ENCODE measurements at regions of chr19 and their contacts with region 1.

Region 1: DNA sequence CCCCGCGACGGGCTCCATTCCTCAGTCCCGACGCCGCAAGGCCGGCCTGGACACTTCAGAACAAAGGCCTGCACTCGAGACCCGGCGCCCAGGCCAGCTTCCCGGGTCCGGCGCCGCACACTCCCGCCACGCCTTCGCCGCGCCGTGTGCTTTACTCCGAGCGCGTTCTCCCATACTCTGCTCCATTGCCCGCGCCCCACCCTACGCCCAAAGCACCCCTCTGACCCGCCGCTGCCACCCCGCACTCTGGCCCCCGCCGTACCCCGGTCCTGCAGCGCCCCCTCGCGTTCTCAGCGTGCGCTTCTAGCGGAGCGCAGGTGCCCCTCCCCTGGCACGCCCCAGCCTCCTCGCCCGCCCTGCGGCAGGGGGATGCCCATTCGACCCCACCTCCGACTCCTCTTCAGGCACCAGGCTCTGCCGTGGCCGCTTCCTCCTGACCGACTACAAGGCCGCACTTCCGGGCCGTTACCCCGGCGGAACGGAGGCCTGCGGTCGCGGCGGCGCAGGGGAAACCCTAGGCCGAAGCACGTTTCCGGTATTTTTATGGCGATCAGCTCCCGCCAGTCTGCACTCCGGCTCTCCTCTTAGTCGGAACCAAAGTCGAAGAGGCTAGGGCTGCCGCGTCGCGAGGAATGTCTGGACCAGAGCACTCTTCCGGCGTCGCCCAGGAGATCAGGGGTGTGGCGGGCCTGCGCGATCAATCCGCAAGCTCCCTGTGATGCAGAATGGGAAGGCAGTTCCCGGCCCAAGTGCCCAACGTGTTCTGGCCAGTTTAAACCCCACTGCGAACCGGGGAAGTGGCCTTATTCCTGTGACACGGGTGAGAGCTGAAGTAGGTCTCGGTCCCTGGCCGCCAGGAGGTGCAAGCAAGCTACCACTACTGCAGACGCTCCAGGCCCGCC is at the start of gene ZBTB45:
- DNase-seq: peak; percentile 91 to 96
- H3K4me3 ChIP-seq: peak within 1 kb of the TSS; percentile 54 to 87 (median 70)
- H3K27ac ChIP-seq: peak within 1 kb of the TSS; percentile 91
- H3K4me1 ChIP-seq: peaks cover 0 to 29% (median 16%) of the 10 kb centered on the region in 4 experiments; a peak in 6 of 7 replicates
- H3K27me3 ChIP-seq: no peaks in the 10 kb centered on the region; a peak in 1 of 7 replicates
- CTCF ChIP-seq: peak; percentile 83 to 93 (median 86)
- EP300 ChIP-seq: no peak
- POLR2A ChIP-seq: peak; percentile 8 to 37; a peak in 2 of 3 replicates
- RAD21 ChIP-seq: peak; percentile 78 to 79
- total RNA-seq, gene ZBTB45: 16.9 and 17.3 TPM in 2 replicates

Region 2: GRCh38 chr19:58475714-58476497 is 43.7 kb before region 1 on chr19 and contains the start of gene ZNF446:
- CTCF ChIA-PET with region 1: interaction called, 7 read pairs
- POLR2A ChIA-PET with region 1: interaction called, 14 read pairs
- DNase-seq: peak; percentile 76 to 93
- H3K4me3 ChIP-seq: peak within 1 kb of the TSS; percentile 42 to 76 (median 70)
- H3K27ac ChIP-seq: peak within 1 kb of the TSS; percentile 65; the same call in 1 of the 2 replicates
- H3K4me1 ChIP-seq: peaks cover 0 to 6% (median 5%) of the 10 kb centered on the region in 4 experiments; a peak in 6 of 7 replicates
- H3K27me3 ChIP-seq: peaks cover 0 to 3% (median 0%) of the 10 kb centered on the region in 4 experiments; a peak in 3 of 7 replicates
- CTCF ChIP-seq: no peak
- EP300 ChIP-seq: no peak
- POLR2A ChIP-seq: peak in 1 of 2 experiments; percentile 73; a peak in 2 of 3 replicates
- RAD21 ChIP-seq: no peak; a peak in 1 of 4 replicates
- total RNA-seq, gene ZNF446: 4.1 and 4.3 TPM in 2 replicates

Region 3: DNA sequence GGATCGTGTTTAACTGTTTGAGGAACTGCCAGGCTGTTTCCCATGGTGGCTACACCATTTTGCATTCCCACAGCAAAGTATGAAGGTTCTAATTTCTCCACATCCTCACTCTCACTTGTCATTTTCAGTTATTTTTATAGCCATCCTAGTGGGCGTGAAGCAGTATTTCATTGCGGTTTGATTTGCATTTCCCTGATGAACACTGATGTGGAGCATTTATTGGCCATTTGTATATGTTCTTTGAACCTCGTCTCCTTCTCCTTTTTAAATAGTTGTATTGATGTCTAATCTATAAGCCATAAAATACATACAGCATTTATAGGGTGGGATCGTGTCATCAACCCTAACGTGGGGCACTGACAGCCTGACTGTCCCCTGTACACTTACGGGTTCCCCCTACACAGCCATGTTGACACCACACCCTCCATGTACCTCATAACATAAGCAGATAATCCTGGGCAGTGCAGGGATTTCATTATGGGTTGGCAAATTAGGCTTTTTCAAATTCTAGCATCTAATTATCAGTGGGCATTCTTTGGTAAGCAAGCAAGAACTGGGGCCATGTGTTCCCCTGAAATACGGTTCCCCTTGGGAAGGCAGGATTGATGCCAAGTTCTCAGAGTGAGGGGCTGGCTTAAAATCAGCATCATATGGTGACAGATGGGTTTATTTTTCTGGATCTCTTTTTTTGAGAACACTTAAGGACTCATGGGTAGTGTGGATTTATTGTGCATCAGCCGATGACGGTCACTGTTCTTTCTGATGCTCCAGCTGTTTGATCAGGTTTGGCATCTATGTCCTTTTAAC is 11.6 kb after region 1 on chr19:
- CTCF ChIA-PET with region 1: interaction called, 15 read pairs
- POLR2A ChIA-PET with region 1: interaction called, 21 read pairs
- DNase-seq: no peak
- H3K4me3 ChIP-seq: no peak overlapping the region
- H3K27ac ChIP-seq: no peak overlapping the region
- H3K4me1 ChIP-seq: no peaks in the 10 kb centered on the region
- H3K27me3 ChIP-seq: peaks cover 0 to 4% (median 0%) of the 10 kb centered on the region in 4 experiments; a peak in 1 of 7 replicates
- CTCF ChIP-seq: no peak
- EP300 ChIP-seq: no peak
- POLR2A ChIP-seq: no peak
- RAD21 ChIP-seq: no peak

Region 4: DNA sequence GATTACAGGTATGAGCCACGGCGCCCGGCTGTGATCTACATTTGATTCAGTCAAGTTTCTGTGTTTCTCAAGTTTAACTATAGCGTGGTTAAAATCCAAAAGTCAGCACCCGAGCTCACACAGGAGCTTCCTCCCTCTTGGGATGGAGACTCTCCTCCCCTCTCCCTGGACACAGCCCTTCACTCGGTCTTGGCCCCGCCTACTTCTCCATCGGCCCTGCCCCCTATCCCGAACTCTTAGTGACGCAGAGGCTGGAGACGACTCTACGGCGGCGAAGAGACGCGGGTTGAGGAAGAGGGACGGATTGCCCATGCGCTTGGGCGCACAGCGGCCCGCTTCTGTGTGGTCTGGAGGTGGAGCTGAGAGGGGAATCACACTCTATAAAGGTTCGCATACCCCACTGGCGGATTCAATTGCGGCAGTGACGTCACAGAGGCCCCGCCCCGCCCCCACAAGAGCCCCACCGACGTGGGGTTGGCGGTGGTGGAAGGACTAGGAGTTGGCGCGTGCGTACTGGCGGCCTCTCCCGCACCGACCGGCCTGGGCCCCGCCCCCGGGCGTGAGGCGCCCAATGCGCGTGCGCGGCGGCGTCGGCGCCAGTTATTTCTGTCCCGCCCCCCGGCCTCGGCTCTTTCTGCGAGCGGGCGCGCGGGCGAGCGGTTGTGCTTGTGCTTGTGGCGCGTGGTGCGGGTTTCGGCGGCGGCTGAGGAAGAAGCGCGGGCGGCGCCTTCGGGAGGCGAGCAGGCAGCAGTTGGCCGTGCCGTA is 24.4 kb after region 1 on chr19 and contains the start of gene TRIM28:
- CTCF ChIA-PET with region 1: interaction called, 26 read pairs
- POLR2A ChIA-PET with region 1: interaction called, 650 read pairs
- DNase-seq: peak; percentile 91 to 99
- H3K4me3 ChIP-seq: peak within 1 kb of the TSS; percentile 89 to 100 (median 94)
- H3K27ac ChIP-seq: peak within 1 kb of the TSS; percentile 96
- H3K4me1 ChIP-seq: peaks cover 3 to 10% (median 5%) of the 10 kb centered on the region in 4 experiments; a peak in 6 of 7 replicates
- H3K27me3 ChIP-seq: peaks cover 0 to 24% (median 10%) of the 10 kb centered on the region in 4 experiments; a peak in 5 of 7 replicates
- CTCF ChIP-seq: no peak
- EP300 ChIP-seq: 0 out of 3 replicates have a peak, but pooled peaks of 1 of the 2 experiments have one; percentile 1
- POLR2A ChIP-seq: peak; percentile 93 to 95
- RAD21 ChIP-seq: no peak
- total RNA-seq, gene TRIM28: 1,398 and 1,433 TPM in 2 replicates

Region 5: GRCh38 chr19:58558623-58559274 is 39.1 kb after region 1 on chr19:
- CTCF ChIA-PET with region 1: interaction called, 35 read pairs
- POLR2A ChIA-PET with region 1: interaction called, 650 read pairs
- DNase-seq: peak; percentile 97 to 100
- H3K4me3 ChIP-seq: peak overlapping the region; percentile 76 to 97 (median 86)
- H3K27ac ChIP-seq: peak overlapping the region; percentile 98
- H3K4me1 ChIP-seq: peaks cover 0 to 45% (median 22%) of the 10 kb centered on the region in 4 experiments; a peak in 6 of 7 replicates
- H3K27me3 ChIP-seq: peaks cover 0 to 14% (median 5%) of the 10 kb centered on the region in 4 experiments; a peak in 4 of 7 replicates
- CTCF ChIP-seq: no peak
- EP300 ChIP-seq: no peak
- POLR2A ChIP-seq: peak in 1 of 2 experiments; percentile 78; a peak in 2 of 3 replicates
- RAD21 ChIP-seq: no peak

Region 6: GRCh38 chr19:58581227-58582151 is 61.9 kb after region 1 on chr19:
- CTCF ChIA-PET with region 1: interaction called, 21 read pairs
- POLR2A ChIA-PET with region 1: interaction called, 82 read pairs
- DNase-seq: peak; percentile 92 to 99
- H3K4me3 ChIP-seq: no peak overlapping the region
- H3K27ac ChIP-seq: no peak overlapping the region
- H3K4me1 ChIP-seq: peaks cover 0 to 6% (median 0%) of the 10 kb centered on the region in 4 experiments; a peak in 3 of 7 replicates
- H3K27me3 ChIP-seq: no peaks in the 10 kb centered on the region
- CTCF ChIP-seq: peak; percentile 99 to 100 (median 99)
- EP300 ChIP-seq: no peak; a peak in 1 of 3 replicates
- POLR2A ChIP-seq: no peak
- RAD21 ChIP-seq: peak; percentile 90 to 93